Activated CD4-positive, alpha-beta memory T cell treated with anti-CD3 and anti-CD28 coated beads, Interleukin-2, amount 10 ng/mL, durations not matched to agents 7 days and 5 days (primary cell): ENCODE measurements at regions of chr20 and their contacts with region 1.

Region 1: GRCh38 chr20:5996765-5997164 is 46.3 kb downstream of the MCM8 start:
- DNase-seq: peak; percentile 72
- H3K4me3 Mint-ChIP-seq: no peak overlapping the region
- H3K27ac Mint-ChIP-seq: peak overlapping the region; percentile 67
- H3K4me1 Mint-ChIP-seq: peaks cover 33% of the 10 kb centered on the region
- H3K27me3 Mint-ChIP-seq: no peaks in the 10 kb centered on the region

Region 2: GRCh38 chr20:5950271-5951031 is 46.3 kb before region 1 on chr20 and contains the starts of genes MCM8 and TRMT6:
- CTCF ChIA-PET with region 1: interaction called, 3 read pairs
- POLR2A ChIA-PET with region 1: interaction called, 14 read pairs
- DNase-seq: peak; percentile 97
- H3K4me3 Mint-ChIP-seq: peak within 1 kb of the TSS; percentile 81
- H3K27ac Mint-ChIP-seq: peak within 1 kb of the TSS; percentile 80
- H3K4me1 Mint-ChIP-seq: peaks cover 79% of the 10 kb centered on the region
- H3K27me3 Mint-ChIP-seq: no peaks in the 10 kb centered on the region
- total RNA-seq, gene MCM8: 33.2 to 34.5 TPM
- total RNA-seq, gene TRMT6: 17.0 to 19.1 TPM

Region 3: DNA sequence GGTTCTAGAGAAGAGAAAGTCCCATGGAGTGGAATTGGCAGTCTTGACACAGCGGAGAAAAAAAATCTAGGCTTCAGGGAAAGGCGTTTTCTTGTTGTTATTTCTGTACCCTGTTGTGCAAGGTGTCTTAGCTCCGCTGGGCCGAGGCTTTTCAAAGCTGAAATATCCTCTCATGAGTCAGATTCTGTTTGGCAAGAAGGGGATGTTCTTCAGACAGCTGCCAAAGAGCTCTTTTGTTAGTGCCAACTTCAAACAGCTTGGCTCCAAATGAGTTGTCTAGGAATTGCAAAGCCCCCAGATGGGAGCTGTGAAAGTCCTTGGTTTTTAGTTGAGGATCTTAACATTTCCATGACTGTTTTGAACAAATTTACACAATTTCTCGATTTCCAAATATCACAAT is 11.5 kb after region 1 on chr20:
- CTCF ChIA-PET with region 1: interaction called, 11 read pairs
- POLR2A ChIA-PET with region 1: no interaction called
- DNase-seq: no peak
- H3K4me3 Mint-ChIP-seq: no peak overlapping the region
- H3K27ac Mint-ChIP-seq: no peak overlapping the region
- H3K4me1 Mint-ChIP-seq: peaks cover 35% of the 10 kb centered on the region
- H3K27me3 Mint-ChIP-seq: no peaks in the 10 kb centered on the region

Region 4: DNA sequence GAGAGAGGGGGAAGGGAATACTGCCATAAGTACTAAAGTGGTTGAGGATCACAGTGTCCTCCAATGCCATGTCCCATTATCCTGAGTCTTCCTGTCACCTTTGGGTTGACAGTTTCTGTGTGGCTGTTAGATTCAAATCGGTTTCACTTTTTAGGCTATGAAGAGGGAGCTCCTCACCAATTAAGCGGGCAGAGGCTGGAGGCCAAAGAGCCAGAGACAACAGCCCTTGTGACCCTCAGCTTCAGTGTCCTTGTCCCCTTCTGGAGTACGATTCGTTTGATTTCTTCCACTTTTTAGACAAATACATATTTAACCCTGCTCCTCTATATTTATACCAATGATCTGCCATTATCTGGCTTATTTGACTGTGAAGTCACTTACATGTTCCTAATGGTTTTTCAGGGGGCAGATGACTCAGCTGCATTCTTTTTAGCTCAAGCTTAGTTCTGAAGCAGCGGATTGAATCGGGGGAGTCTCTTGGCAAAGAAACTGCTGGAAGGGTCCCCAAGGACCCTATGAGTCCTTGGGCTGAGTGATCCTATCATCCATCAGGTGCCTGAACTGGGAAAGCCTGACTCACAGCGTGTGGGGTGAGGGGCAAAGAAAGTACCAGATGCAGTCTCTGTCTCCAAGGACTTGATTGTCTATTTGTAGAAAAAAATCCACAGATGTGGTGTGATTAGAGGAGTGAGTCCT is 107.9 kb after region 1 on chr20:
- CTCF ChIA-PET with region 1: no interaction called
- POLR2A ChIA-PET with region 1: no interaction called
- DNase-seq: no peak
- H3K4me3 Mint-ChIP-seq: no peak overlapping the region
- H3K27ac Mint-ChIP-seq: no peak overlapping the region
- H3K4me1 Mint-ChIP-seq: no peaks in the 10 kb centered on the region
- H3K27me3 Mint-ChIP-seq: peaks cover 9% of the 10 kb centered on the region